ENCODE measurements at regions of chr1 and their contacts with region 1.

Region 1: DNA sequence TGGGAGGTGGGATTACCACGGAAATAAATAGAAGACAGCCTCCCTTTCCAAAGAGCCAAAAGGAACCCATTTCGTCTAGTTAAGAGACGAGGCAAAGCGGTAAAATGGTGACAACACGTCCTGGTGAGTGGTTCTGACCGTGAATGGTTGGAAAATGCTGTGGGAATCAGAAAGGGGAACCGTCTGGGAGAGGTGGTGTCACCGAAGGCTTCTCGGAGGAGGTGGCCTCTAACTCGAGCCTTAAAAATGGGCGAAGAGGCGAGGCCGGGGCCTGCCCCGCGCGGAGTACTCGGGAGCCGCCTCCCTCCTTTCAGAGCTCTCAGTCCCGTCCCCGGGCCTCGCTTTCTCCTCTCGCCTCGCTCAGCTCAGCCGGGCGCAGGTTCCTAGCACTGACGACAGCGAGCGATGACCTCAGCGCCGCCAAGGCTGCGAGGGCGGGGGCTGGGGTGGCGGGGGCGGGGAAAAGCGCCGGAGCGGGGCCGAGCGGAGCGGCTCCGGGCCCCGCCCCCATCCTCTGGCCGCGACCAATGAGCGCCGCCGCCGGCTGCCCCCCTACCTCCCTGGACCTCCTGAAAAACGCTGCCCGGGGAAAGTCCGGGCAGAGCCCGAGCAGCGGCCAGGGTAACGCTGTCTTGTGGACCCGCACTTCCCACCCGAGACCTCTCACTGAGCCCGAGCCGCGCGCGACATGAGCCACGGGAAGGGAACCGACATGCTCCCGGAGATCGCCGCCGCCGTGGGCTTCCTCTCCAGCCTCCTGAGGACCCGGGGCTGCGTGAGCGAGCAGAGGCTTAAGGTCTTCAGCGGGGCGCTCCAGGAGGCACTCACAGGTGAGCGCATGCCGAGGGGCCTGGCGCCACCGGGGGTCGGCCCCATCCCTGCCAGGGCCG is at the start of gene BTG2:
- DNase-seq: peak; percentile 90 to 91
- H3K4me3 ChIP-seq: peak within 1 kb of the TSS; percentile 70
- H3K4me3 Mint-ChIP-seq: peak within 1 kb of the TSS; percentile 65
- H3K27ac Mint-ChIP-seq: peak within 1 kb of the TSS; percentile 83
- H3K4me1 ChIP-seq: peaks cover 25% of the 10 kb centered on the region
- H3K4me1 Mint-ChIP-seq: peaks cover 27% of the 10 kb centered on the region
- H3K27me3 ChIP-seq: no peaks in the 10 kb centered on the region
- H3K27me3 Mint-ChIP-seq: no peaks in the 10 kb centered on the region
- CTCF ChIP-seq: no peak
- total RNA-seq, gene BTG2: 21.2 and 21.6 TPM in 2 replicates

Region 2: DNA sequence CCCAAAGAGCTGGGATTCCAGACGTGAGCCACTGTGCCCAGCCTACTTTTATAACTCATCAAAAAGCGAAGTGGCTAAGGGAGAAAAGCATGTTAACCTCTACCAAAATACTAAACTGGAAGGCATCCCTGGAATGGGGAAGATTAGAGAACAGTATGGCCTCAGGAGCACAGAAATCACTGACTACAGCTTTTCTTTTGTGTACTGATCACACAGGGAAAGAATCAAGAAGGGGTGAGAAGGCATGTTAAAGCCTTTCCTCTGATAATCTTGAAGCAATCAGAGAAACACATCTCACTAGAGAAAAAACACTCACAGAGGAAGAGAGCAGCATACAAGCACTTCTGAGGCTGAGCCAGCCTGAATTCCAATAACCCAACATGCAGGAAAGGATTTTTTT is 483.7 kb before region 1 on chr1:
- CTCF ChIA-PET with region 1: no interaction called
- POLR2A ChIA-PET with region 1: no interaction called
- intact Hi-C with region 1: no loop called
- DNase-seq: peak in 1 of 2 experiments; percentile 52
- H3K4me3 ChIP-seq: no peak overlapping the region
- H3K4me3 Mint-ChIP-seq: peak overlapping the region; percentile 12
- H3K27ac Mint-ChIP-seq: peak overlapping the region; percentile 81
- H3K4me1 ChIP-seq: peaks cover 41% of the 10 kb centered on the region
- H3K4me1 Mint-ChIP-seq: peaks cover 39% of the 10 kb centered on the region
- H3K27me3 ChIP-seq: no peaks in the 10 kb centered on the region
- H3K27me3 Mint-ChIP-seq: peaks cover 3% of the 10 kb centered on the region
- CTCF ChIP-seq: no peak

Region 3: GRCh38 chr1:203290261-203291089 is 14.7 kb before region 1 on chr1:
- CTCF ChIA-PET with region 1: interaction called, 6 read pairs
- POLR2A ChIA-PET with region 1: interaction called, 57 read pairs
- intact Hi-C with region 1: loop called (anchors 1 kb)
- DNase-seq: peak; percentile 96 to 97
- H3K4me3 ChIP-seq: peak overlapping the region; percentile 32
- H3K4me3 Mint-ChIP-seq: peak overlapping the region; percentile 70
- H3K27ac Mint-ChIP-seq: peak overlapping the region; percentile 94
- H3K4me1 ChIP-seq: peaks cover 41% of the 10 kb centered on the region
- H3K4me1 Mint-ChIP-seq: peaks cover 30% of the 10 kb centered on the region
- H3K27me3 ChIP-seq: no peaks in the 10 kb centered on the region
- H3K27me3 Mint-ChIP-seq: no peaks in the 10 kb centered on the region
- CTCF ChIP-seq: no peak

Measured in Caco-2 (cell line).